ENCODE measurements at regions of chr1 and their contacts with region 1.

Region 1: DNA sequence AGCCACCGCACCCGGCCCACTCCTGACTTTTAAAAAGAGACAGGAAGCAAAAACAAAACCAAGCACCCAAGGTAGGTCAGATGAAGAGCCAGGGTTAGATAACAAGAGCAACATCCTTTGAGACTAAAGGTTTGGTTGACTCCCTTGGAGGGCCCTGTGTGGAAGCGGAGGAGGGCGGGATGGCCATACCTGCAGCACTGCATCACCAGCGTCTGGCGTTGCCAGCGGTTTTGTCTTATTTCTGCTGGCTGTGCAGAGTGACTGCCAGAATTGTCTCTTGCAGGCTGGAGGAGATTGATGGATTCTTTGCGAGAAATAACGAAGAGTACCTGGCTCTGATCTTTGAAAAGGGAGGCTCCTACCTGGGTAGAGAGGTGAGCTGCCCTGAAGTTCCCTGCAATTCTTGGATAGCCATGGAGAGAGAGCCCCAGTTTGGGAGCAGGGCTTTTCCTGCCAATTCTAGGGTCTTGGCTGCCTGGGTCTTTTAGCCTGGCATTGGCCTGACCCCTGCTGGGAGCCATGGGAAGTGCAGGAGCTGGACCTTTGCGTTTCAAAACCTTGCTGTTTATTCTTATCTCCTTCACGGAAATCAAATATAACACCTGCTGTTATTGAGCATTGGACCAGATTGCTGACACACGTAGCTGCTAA is 24.0 kb downstream of the QSOX1 start:
- DNase-seq: peak; percentile 68
- H3K4me3 Mint-ChIP-seq: no peak overlapping the region
- H3K27ac Mint-ChIP-seq: no peak overlapping the region
- H3K4me1 Mint-ChIP-seq: no peaks in the 10 kb centered on the region
- H3K27me3 Mint-ChIP-seq: no peaks in the 10 kb centered on the region

Region 2: GRCh38 chr1:179706339-179706941 is 472.2 kb before region 1 on chr1:
- CTCF ChIA-PET with region 1: interaction called, 19 read pairs
- POLR2A ChIA-PET with region 1: no interaction called
- DNase-seq: peak; percentile 58
- H3K4me3 Mint-ChIP-seq: no peak overlapping the region
- H3K27ac Mint-ChIP-seq: no peak overlapping the region
- H3K4me1 Mint-ChIP-seq: peaks cover 12% of the 10 kb centered on the region
- H3K27me3 Mint-ChIP-seq: peaks cover 2% of the 10 kb centered on the region

Region 3: DNA sequence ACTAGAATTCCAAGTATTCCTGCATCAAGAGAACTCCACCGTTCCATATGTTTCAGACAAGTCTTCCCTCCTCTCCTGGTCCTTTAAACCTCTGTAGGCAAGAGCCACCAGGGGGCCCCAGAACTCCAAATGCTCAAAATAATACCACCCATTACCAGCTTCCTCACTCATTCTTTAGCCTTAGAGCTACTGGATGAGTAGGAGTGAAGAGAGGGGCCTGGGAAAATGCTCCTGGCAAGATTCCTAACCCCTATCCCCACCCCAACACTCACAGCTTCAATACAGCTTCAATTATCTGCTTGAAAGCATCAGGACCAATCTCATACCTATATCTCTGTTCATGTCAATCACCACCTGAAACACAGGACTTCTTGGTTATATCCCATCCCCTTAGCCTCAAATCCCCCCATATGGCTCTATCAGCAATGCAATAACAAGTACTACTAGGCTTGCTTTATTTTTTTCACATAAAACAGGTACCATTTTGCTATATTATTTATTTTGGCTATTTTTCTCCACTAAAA is 310.8 kb before region 1 on chr1:
- CTCF ChIA-PET with region 1: interaction called, 88 read pairs
- POLR2A ChIA-PET with region 1: no interaction called
- DNase-seq: peak; percentile 53
- H3K4me3 Mint-ChIP-seq: no peak overlapping the region
- H3K27ac Mint-ChIP-seq: no peak overlapping the region
- H3K4me1 Mint-ChIP-seq: peaks cover 8% of the 10 kb centered on the region
- H3K27me3 Mint-ChIP-seq: no peaks in the 10 kb centered on the region

Region 4: GRCh38 chr1:179973198-179974110 is 205.2 kb before region 1 on chr1:
- CTCF ChIA-PET with region 1: no interaction called
- POLR2A ChIA-PET with region 1: no interaction called
- DNase-seq: no peak
- H3K4me3 Mint-ChIP-seq: no peak overlapping the region
- H3K27ac Mint-ChIP-seq: no peak overlapping the region
- H3K4me1 Mint-ChIP-seq: peaks cover 13% of the 10 kb centered on the region
- H3K27me3 Mint-ChIP-seq: no peaks in the 10 kb centered on the region

Region 5: DNA sequence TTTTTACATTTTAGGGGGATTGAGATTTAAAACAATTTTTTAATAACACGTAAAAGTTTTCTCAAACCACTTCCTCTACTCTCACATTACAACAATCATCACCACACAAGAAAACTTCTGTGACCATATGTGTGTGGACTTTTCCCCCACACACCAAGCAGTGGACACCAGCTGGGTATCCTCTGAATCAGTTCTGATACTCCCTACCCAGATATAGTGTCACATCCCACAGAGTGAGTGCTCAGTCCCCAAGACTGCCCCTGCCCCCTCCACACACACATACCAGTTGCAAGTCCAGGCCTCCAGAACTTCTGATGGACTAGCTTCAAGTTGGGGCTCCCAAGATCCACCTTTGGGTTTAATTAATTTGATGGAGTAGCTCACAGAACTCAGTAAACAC is 77.2 kb before region 1 on chr1:
- CTCF ChIA-PET with region 1: interaction called, 11 read pairs
- POLR2A ChIA-PET with region 1: no interaction called
- DNase-seq: no peak
- H3K4me3 Mint-ChIP-seq: no peak overlapping the region
- H3K27ac Mint-ChIP-seq: no peak overlapping the region
- H3K4me1 Mint-ChIP-seq: peaks cover 16% of the 10 kb centered on the region
- H3K27me3 Mint-ChIP-seq: no peaks in the 10 kb centered on the region

Measured in activated CD4-positive, alpha-beta memory T cell treated with anti-CD3 and anti-CD28 coated beads, Interleukin-2, amount 10 ng/mL, durations not matched to agents 7 days and 5 days (primary cell).